Activated naive CD4-positive, alpha-beta T cell treated with anti-CD3 and anti-CD28 coated beads for 36 hours (primary cell): ENCODE measurements at regions of chr6 and their contacts with region 1.

Region 1: DNA sequence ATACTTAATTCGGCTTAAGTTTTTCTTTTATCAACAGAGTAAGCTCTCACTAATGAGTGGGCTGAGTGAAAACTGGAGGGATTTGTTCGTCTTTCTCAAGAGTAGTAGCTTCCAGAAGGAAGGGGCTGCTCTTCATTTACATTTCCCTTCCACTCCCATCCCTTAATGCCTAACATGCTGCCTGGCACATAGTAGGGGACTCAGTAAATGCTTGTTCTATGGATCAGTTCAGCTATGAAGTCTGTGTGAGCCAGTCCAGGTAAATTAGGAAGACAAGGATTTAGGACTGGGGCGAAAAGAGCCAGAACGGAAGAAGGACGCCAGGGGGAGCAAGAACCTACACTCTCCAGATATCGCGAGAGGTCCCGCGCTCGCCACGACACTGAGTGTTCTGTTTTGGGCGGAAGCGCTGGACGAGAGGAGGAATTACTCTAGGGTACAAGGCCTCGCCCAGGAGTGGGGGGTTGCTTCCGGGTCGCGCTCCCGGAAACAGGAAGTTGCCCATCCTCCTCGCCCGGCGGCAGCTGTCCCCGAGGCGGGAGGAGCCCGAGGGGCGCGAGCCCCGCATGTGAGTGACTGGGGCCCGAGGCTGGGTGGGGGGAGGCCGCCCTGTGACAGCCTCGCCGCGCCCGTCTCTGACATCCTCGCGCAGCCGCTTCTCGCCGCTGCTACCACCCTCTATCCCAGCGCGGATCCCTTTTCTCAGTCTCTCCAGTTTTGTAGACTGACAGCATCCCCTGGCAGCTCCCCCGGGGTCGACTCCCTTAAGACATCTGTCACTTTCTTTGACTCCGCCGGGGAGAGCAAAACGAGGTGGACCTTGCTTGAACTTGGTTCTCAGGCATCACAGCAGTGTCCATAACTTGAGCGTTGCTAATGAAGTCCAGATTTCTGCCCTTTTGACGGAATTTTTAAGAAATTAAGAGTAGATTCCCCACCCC is at the start of gene C6orf89:
- DNase-seq: peak; percentile 99
- H3K4me3 Mint-ChIP-seq: peak within 1 kb of the TSS; percentile 87
- H3K27ac Mint-ChIP-seq: peak within 1 kb of the TSS; percentile 92
- H3K4me1 Mint-ChIP-seq: peaks cover 33% of the 10 kb centered on the region
- H3K27me3 Mint-ChIP-seq: no peaks in the 10 kb centered on the region
- total RNA-seq, gene C6orf89: 24.2 to 24.5 TPM

Region 2: GRCh38 chr6:36874443-36875249 is 11.1 kb before region 1 on chr6 and contains the start of gene PPIL1:
- CTCF ChIA-PET with region 1: interaction called, 48 read pairs
- intact Hi-C with region 1: loop called (anchors 1 kb)
- DNase-seq: peak; percentile 88
- H3K4me3 Mint-ChIP-seq: peak within 1 kb of the TSS; percentile 94
- H3K27ac Mint-ChIP-seq: peak within 1 kb of the TSS; percentile 98
- H3K4me1 Mint-ChIP-seq: peaks cover 39% of the 10 kb centered on the region
- H3K27me3 Mint-ChIP-seq: peaks cover 8% of the 10 kb centered on the region
- total RNA-seq, gene PPIL1: 42.8 to 44.0 TPM

Region 3: DNA sequence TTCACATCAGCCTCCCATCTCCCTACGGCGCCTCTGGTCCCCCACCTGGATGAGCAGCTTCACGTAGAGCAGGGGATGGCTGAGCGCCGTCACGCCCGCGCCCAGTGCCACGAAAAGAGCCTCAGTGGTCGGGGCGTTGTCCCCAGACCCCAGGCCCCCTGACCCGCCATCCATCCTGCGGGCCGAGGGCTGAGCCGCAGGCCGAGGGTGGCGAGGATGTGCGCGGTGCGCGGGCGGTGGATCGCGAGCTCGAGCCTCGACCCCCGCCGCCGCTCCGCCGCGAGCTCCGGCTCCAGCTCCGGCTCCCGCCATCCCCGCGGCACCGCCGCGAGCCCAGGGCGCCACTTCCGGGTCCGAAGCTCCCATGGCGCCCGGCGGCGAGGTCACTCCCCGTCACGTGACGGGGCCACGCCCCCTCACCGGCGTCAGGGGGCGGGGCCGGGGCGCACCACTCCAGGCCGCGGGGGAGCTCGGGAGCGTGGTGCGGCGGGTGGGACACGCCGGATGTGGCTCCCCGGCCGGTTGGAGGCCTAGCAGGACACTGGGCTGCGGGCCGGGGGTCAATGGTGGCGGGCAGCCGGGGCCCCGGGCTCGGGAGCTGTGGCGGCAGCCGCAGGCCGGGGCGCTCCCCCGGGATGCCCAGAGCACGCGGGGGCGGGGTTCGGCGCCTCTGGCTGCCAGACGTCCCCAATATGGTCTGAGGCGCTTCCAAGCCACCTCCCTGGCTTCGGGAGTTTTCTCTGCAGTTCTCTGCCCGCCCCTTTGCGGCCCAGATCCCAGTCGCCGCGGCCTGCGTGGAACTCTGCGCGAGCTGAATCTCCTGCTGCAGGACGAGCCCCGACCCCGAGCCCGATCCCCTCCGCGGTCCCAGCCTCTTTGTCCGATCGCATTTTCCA is 100.3 kb after region 1 on chr6 and contains the start of gene MTCH1:
- CTCF ChIA-PET with region 1: interaction called, 4 read pairs
- intact Hi-C with region 1: loop called (anchors 1 kb)
- DNase-seq: peak; percentile 85
- H3K4me3 Mint-ChIP-seq: peak within 1 kb of the TSS; percentile 97
- H3K27ac Mint-ChIP-seq: peak within 1 kb of the TSS; percentile 91
- H3K4me1 Mint-ChIP-seq: peaks cover 19% of the 10 kb centered on the region
- H3K27me3 Mint-ChIP-seq: no peaks in the 10 kb centered on the region
- total RNA-seq, gene MTCH1: 97.4 to 101 TPM